Naive thymus-derived CD4-positive, alpha-beta T cell (primary cell): ENCODE measurements at regions of chr16 and their contacts with region 1.

Region 1: GRCh38 chr16:50731130-50731988 is 10.5 kb upstream of the CYLD start:
- DNase-seq: peak in 8 of 9 donors; percentile 22 to 48 (median 39)
- ATAC-seq: peak; percentile 58
- H3K4me3 ChIP-seq: no peak overlapping the region
- H3K4me3 Mint-ChIP-seq: peak overlapping the region; percentile 10 to 73 (median 51)
- H3K27ac ChIP-seq: peak overlapping the region; percentile 27
- H3K27ac Mint-ChIP-seq: peak overlapping the region; percentile 61 to 92 (median 84)
- H3K4me1 ChIP-seq: peaks cover 0 to 4% of the 10 kb centered on the region in 2 donors
- H3K4me1 Mint-ChIP-seq: peaks cover 16 to 37% (median 23%) of the 10 kb centered on the region in 7 donors
- H3K27me3 ChIP-seq: no peaks in the 10 kb centered on the region
- H3K27me3 Mint-ChIP-seq: no peaks in the 10 kb centered on the region

Region 2: DNA sequence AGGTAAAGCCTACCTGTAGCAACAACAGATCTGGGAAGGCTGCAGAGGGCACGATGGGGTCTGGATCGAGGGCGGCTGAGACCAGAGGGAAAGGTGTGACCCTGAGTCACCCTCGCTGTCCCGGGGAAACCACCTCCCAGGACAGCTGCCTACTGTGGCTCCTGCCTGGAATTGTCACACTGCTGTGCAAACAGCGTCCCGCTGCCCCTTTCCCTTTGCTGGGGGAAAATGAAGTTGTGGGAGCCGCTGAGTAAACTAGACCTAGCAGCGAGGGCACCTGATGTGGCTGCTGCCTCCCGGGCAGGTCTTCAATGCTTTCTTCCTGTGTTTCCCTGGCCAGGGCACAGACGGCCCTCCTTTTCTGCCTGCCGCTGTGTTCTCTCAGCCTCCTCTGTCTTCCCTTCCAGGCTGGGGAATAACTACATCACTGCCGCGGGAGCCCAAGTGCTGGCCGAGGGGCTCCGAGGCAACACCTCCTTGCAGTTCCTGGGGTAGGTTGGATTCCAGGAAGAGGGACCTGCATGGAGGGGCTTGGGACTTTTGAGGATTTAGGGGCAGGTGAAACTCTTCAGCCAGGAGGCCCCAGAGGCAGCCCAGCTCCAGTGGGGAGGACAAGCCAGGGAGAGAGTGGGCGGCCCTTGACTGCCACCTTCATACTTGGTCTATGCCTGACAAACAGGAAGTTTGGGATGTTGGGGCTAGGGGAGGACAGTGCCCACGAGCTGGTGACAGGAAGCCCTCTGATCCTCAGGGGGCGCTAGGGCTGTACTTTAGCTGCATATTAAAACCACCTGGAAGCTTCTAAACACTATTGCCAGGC is 11.6 kb before region 1 on chr16:
- CTCF ChIA-PET with region 1: interaction called, 11 read pairs
- POLR2A ChIA-PET with region 1: interaction called, 25 read pairs
- intact Hi-C with region 1: loop called in 1 of 2 experiments (anchors 1 kb)
- DNase-seq: peak in 3 of 9 donors; percentile 31 to 40 (median 35)
- ATAC-seq: peak; percentile 38
- H3K4me3 ChIP-seq: no peak overlapping the region
- H3K4me3 Mint-ChIP-seq: peak overlapping the region in 4 of 10 donors; percentile 18 to 71 (median 41)
- H3K27ac ChIP-seq: no peak overlapping the region
- H3K27ac Mint-ChIP-seq: peak overlapping the region in 6 of 9 donors; percentile 41 to 71 (median 54)
- H3K4me1 ChIP-seq: peaks cover 16 to 22% of the 10 kb centered on the region in 2 donors
- H3K4me1 Mint-ChIP-seq: peaks cover 34 to 54% (median 42%) of the 10 kb centered on the region in 7 donors
- H3K27me3 ChIP-seq: no peaks in the 10 kb centered on the region
- H3K27me3 Mint-ChIP-seq: no peaks in the 10 kb centered on the region

Region 3: GRCh38 chr16:50917950-50918703 is 186.8 kb after region 1 on chr16:
- CTCF ChIA-PET with region 1: no interaction called
- POLR2A ChIA-PET with region 1: no interaction called
- intact Hi-C with region 1: no loop called
- DNase-seq: no peak
- ATAC-seq: no peak
- H3K4me3 ChIP-seq: no peak overlapping the region
- H3K4me3 Mint-ChIP-seq: no peak overlapping the region
- H3K27ac ChIP-seq: no peak overlapping the region
- H3K27ac Mint-ChIP-seq: peak overlapping the region in 1 of 9 donors; percentile 59
- H3K4me1 ChIP-seq: no peaks in the 10 kb centered on the region
- H3K4me1 Mint-ChIP-seq: no peaks in the 10 kb centered on the region
- H3K27me3 ChIP-seq: no peaks in the 10 kb centered on the region
- H3K27me3 Mint-ChIP-seq: peaks cover 0 to 34% (median 21%) of the 10 kb centered on the region in 5 donors